Heart right ventricle (tissue), 16 donors: ENCODE measurements at regions of chr9 and their contacts with region 1.

Region 1: DNA sequence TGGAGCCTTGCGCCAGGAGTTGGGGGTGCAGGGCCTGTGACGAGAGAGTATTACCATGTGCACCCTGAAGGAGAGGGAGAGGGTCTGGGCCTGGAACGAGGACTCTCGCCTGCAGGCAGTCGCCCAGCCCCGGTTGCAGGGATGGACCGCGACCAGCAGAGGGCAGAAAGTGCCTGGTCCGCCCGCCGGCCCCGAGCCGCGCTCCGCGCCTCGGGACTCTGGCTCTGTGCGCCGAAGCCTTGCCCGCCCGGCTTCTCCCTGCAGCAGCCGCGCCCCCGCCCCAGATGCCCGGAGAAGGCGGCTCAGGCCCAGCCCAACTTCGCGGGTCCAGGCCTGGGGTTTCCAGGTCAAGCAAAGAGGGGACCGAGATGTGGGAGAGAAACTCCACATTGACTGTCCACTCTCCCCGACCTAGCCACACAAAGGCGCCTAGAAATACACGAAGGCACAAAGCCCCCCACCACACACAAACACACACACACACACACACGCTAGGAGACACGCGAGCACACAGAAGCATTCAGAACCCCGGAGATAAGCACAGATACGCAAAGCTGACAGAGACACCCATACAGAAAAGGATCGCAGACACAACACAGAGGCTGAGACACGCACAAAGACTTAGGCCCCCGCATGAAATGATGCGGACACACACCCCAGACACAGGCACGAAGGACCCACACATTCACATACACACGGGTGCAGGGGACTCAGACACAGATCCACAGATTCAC is 2.0 kb upstream of the LMX1B start:
- DNase-seq: peak; percentile 71 to 82
- ATAC-seq: peak; percentile 68 to 89 (median 86)
- H3K4me3 ChIP-seq: peak overlapping the region in 9 of 10 donors; percentile 22 to 58 (median 51)
- H3K27ac ChIP-seq: peak overlapping the region in 2 of 10 donors; percentile 22 to 41
- H3K4me1 ChIP-seq: peaks cover 4 to 44% (median 38%) of the 10 kb centered on the region in 9 donors
- H3K27me3 ChIP-seq: peaks cover 42 to 95% (median 81%) of the 10 kb centered on the region in 7 donors
- CTCF ChIP-seq: peak; percentile 66 to 95 (median 88)

Region 2: GRCh38 chr9:126549246-126550006 is 62.3 kb before region 1 on chr9:
- intact Hi-C with region 1: no loop called
- DNase-seq: no peak
- ATAC-seq: no peak
- H3K4me3 ChIP-seq: no peak overlapping the region
- H3K27ac ChIP-seq: no peak overlapping the region
- H3K4me1 ChIP-seq: peaks cover 0 to 8% (median 0%) of the 10 kb centered on the region in 9 donors
- H3K27me3 ChIP-seq: no peaks in the 10 kb centered on the region
- CTCF ChIP-seq: no peak

Region 3: GRCh38 chr9:126599047-126599650 is 12.6 kb before region 1 on chr9:
- intact Hi-C with region 1: loop called in 1 of 10 experiments (anchors 1 kb)
- DNase-seq: no peak
- ATAC-seq: no peak
- H3K4me3 ChIP-seq: no peak overlapping the region
- H3K27ac ChIP-seq: no peak overlapping the region
- H3K4me1 ChIP-seq: peaks cover 0 to 5% (median 0%) of the 10 kb centered on the region in 9 donors
- H3K27me3 ChIP-seq: peaks cover 0 to 39% (median 8%) of the 10 kb centered on the region in 7 donors
- CTCF ChIP-seq: no peak

Region 4: DNA sequence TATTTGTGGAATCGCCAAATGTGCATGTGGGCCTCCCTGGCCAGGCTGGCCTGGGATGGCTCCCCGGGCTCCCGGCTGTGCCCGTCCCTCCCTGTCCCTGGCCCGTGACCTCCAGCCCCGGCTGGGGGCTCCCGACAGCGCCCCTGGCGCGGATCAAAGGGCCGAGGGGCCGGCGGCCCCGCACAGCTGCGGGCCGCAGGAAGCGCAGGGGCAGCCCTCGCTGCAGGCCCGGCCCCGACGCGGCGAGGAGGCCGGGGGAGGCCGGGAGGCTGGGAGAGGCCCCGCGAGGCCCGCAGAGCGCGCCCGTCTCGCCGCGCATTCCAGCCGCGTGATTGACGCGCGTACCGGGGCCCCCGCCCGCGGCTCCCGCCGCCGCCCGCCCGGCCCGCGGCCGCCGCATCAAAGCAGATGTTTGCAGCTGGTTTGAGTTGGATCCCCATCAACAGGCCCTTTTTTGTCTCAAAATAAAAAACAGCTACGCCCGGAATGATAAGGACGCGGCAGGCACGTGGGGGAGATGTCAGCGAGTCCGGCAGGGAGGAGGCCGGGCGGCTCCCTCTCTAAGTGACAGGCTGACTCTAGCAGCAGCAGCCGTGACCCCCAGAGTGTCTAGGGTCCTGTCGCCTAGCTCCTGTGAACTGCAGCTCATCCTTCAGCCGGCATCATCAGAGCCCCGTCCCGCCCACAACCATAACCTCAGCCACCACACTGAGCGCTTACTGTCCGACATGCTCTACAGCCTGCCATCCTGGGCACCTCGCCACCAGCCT is 71.4 kb after region 1 on chr9:
- intact Hi-C with region 1: loop called in 1 of 10 experiments (anchors 5 kb)
- DNase-seq: peak in 1 of 2 donors; percentile 25
- ATAC-seq: peak in 6 of 8 donors; percentile 43 to 71 (median 48)
- H3K4me3 ChIP-seq: peak overlapping the region in 4 of 10 donors; percentile 3 to 28 (median 21)
- H3K27ac ChIP-seq: no peak overlapping the region
- H3K4me1 ChIP-seq: peaks cover 0 to 12% (median 5%) of the 10 kb centered on the region in 9 donors
- H3K27me3 ChIP-seq: peaks cover 0 to 98% (median 85%) of the 10 kb centered on the region in 7 donors
- CTCF ChIP-seq: no peak

Region 5: DNA sequence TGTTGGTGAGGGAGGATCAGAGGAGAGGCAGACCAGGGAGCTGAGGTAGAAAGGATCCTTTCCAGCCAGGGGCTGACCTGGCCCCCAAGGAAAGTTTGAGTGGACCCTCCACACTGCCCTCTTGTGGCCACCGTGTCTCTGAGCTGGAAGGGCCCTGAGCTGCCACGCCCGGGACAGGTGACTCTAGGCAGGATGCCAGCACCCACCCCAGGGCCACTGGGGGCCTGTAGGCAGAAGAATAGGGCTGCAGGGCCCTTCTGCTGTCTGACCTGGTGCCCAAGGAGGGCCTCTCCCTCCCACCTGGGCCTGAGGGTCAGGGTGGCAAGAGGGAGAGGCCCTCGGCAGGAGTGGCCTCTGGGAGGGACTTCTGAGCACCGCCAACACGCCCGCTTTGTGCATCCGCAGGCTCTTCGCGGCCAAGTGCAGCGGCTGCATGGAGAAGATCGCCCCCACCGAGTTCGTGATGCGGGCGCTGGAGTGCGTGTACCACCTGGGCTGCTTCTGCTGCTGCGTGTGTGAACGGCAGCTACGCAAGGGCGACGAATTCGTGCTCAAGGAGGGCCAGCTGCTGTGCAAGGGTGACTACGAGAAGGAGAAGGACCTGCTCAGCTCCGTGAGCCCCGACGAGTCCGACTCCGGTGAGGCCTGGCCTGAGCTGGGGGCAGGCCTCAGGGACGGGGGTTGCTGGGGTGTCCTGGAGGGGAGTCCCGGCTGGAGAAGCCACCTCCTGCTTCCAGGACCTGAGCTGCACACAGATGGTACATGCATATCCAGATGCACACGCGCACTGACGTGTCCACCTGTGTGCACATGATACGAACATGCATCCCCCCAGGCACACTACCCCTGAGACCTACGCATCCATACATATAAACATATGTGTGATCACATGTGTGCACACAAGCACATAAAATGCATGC is 78.9 kb after region 1 on chr9:
- intact Hi-C with region 1: loop called in 7 of 10 experiments (anchors 2 to 10 kb)
- DNase-seq: peak; percentile 25 to 55
- ATAC-seq: peak; percentile 32 to 65 (median 45)
- H3K4me3 ChIP-seq: no peak overlapping the region
- H3K27ac ChIP-seq: no peak overlapping the region
- H3K4me1 ChIP-seq: no peaks in the 10 kb centered on the region
- H3K27me3 ChIP-seq: peaks cover 0 to 55% (median 48%) of the 10 kb centered on the region in 7 donors
- CTCF ChIP-seq: peak; percentile 50 to 78 (median 66)